Left cardiac atrium (tissue), 4 donors: ENCODE measurements at regions of chr10 and their contacts with region 1.

Region 1: GRCh38 chr10:102583435-102584417 is 60.6 kb upstream of the TRIM8 start:
- DNase-seq: peak; percentile 88
- ATAC-seq: peak; percentile 92 to 93

Region 2: GRCh38 chr10:102394079-102394800 is 189.5 kb before region 1 on chr10:
- intact Hi-C with region 1: loop called in 1 of 2 experiments (anchors 5 kb)
- DNase-seq: peak; percentile 97
- ATAC-seq: peak; percentile 91

Region 3: DNA sequence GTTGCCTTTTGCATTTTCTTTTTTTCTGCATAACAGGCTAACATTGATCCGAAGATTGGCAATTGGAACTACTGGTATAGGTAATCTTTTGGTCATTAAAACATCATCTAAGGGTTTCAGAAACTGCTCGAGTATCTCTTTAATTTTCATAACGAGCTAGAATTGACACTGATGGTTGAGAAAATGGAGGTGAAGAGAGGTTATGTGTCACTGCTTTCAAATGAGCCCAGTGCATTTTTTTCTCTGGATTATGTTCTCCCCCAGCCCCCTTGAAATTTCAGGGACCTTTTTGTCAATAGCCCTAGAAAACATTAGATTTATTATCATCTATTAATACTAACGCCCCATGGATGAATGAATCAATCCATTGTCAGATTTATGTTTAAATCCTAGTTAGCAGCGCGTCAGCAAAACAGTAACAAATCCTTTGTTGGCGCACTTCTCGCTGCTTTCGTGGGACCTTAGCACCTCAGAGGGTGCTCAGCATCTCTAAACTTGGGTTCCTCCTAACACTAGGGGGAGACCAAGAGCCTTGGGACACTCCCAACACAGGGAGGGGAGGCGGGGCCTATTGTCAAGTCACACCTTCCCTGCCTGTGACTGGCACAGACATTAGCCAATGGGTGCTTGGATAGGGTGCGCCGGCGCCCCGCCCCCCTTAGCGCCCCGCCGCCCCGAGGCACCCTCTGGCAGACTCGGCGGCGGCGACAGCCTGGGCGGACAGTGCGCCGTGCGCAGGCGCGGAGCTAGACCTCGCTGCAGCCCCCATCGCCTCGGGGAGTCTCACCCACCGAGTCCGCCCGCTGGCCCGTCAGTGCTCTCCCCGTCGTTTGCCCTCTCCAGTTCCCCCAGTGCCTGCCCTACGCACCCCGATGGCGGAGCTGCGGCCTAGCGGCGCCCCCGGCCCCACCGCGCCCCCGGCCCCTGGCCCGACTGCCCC is 80.2 kb before region 1 on chr10 and contains the start of gene SUFU:
- intact Hi-C with region 1: loop called (anchors 2 to 10 kb)
- DNase-seq: peak; percentile 98
- ATAC-seq: peak; percentile 88 to 89
- total RNA-seq, gene SUFU: 6.6 to 9.2 TPM

Region 4: DNA sequence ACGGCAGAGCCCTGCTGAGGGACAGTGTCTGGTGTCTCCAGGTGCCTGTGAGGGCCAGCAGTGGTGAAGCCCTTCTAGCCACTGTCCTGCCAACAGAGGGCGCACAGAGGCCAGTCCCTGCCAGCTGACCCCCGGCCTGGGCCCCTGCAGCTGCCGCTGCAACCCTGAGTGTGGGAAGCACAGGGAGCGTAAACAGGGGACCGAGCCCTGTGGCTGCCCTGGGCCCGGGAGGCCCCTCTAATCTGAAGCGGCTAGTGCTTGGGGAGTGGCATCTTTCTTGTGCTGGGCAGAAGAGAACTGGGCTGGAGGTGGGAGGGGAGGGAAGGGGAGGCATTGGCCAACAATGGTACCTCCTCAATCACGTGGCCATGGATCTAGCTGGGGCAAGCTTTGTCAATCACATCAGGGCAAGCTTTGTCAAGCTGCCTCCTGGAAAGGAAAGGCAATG is 95.1 kb after region 1 on chr10:
- intact Hi-C with region 1: no loop called
- DNase-seq: peak; percentile 67
- ATAC-seq: peak; percentile 61 to 64